Heart left ventricle (tissue), 16 donors: ENCODE measurements at regions of chr11 and their contacts with region 1.

Region 1: GRCh38 chr11:57456960-57457642 is 3.2 kb upstream of the RTN4RL2 start:
- DNase-seq: peak; percentile 87 to 95 (median 89)
- ATAC-seq: peak; percentile 57 to 89 (median 86)
- H3K4me3 ChIP-seq: peak overlapping the region in 2 of 12 donors; percentile 4 to 19
- H3K27ac ChIP-seq: no peak overlapping the region
- H3K4me1 ChIP-seq: peaks cover 3 to 43% (median 25%) of the 10 kb centered on the region in 12 donors
- H3K27me3 ChIP-seq: peaks cover 9 to 47% (median 32%) of the 10 kb centered on the region in 9 donors
- CTCF ChIP-seq: peak; percentile 98 to 100 (median 98)
- POLR2A ChIP-seq: no peak

Region 2: DNA sequence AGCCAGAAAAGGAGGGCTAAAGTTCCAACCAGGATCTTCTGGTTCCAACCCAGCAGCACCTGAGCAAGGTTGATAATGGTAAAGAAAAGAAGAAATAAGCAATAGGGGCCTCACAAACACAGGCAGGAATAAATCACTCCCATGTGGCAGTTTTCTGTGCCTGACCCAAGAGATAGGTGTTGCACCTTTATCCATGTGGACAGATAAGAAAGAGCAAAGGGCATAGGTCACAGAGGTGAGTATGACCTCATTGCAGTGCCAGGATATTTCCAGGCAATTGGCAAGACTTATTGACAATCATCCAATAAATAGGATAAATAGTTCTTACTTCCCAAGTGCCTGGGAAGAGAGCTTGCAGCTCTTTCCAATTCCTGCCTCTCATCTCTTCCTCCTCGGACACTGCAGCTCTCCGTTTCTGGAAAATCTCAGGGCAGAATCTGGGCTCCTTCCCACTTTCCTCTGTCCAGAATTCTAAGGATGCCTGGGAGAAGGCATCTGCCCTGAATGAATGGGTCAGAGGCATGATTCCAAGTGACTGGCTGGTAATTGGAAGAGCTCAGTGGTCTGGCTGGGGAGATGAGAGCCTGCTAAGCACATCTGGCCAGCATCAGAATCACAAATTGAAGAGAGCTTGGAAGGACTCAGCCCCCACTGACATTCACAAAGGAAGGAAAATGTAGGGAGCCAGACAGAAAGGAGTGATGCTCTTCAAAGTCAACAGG is 289.8 kb before region 1 on chr11:
- intact Hi-C with region 1: no loop called
- DNase-seq: no peak
- ATAC-seq: no peak
- H3K4me3 ChIP-seq: no peak overlapping the region
- H3K27ac ChIP-seq: no peak overlapping the region
- H3K4me1 ChIP-seq: peaks cover 0 to 4% (median 0%) of the 10 kb centered on the region in 12 donors
- H3K27me3 ChIP-seq: peaks cover 0 to 3% (median 0%) of the 10 kb centered on the region in 9 donors
- CTCF ChIP-seq: no peak
- POLR2A ChIP-seq: no peak

Region 3: DNA sequence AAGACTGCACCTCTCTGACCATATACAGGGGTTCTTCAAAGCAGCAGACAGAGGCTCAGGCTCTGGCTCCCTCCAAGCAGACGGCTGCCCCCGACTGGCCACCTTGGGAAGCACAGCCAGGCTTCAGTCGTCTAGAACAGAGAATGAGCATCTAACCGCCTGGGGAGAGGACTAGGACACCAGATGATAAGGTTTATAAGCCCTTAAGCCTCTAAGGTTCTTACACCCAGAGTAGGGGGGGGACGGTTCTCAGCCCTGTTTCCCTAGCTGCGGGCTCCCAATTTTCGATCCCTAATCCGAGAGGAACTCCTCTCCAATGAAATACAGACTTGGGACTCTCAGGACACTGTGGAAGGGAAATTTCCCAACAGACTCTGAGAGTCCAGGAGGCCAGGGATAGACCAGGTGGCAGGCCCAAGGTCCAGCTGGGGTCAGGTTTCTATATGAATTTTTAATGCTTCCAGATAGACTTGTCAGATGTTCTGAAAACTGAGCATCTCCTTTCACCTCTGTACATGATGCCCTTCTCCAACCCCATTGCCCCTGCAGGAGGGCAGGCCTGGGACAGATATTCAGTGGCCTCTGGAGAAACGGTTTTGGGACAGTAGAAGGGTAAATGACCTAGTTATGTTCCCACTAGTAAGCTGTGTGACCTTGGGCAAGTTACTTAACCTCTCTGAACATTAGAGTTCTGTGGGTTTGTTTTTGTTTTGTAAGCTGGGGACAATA is 23.5 kb after region 1 on chr11:
- intact Hi-C with region 1: loop called in 4 of 10 experiments (anchors 2 kb)
- DNase-seq: peak; percentile 58 to 81 (median 62)
- ATAC-seq: peak; percentile 17 to 54 (median 36)
- H3K4me3 ChIP-seq: no peak overlapping the region
- H3K27ac ChIP-seq: no peak overlapping the region
- H3K4me1 ChIP-seq: peaks cover 3 to 35% (median 22%) of the 10 kb centered on the region in 12 donors
- H3K27me3 ChIP-seq: peaks cover 0 to 36% (median 13%) of the 10 kb centered on the region in 9 donors
- CTCF ChIP-seq: peak; percentile 53 to 82 (median 68)
- POLR2A ChIP-seq: no peak

Region 4: GRCh38 chr11:57638005-57638781 is 181.1 kb after region 1 on chr11:
- intact Hi-C with region 1: loop called (anchors 2 to 10 kb)
- DNase-seq: peak; percentile 76 to 80 (median 79)
- ATAC-seq: peak; percentile 90 to 95 (median 92)
- H3K4me3 ChIP-seq: peak overlapping the region; percentile 40 to 97 (median 86)
- H3K27ac ChIP-seq: peak overlapping the region in 11 of 12 donors; percentile 17 to 87 (median 79)
- H3K4me1 ChIP-seq: peaks cover 0 to 33% (median 22%) of the 10 kb centered on the region in 12 donors
- H3K27me3 ChIP-seq: peaks cover 0 to 6% (median 0%) of the 10 kb centered on the region in 9 donors
- CTCF ChIP-seq: peak in 1 of 12 donors; percentile 3
- POLR2A ChIP-seq: peak in 1 of 2 donors; percentile 37

Region 5: GRCh38 chr11:57644748-57645688 is 187.9 kb after region 1 on chr11:
- intact Hi-C with region 1: loop called in 9 of 10 experiments (anchors 2 to 10 kb)
- DNase-seq: peak; percentile 74 to 83 (median 82)
- ATAC-seq: peak in 3 of 4 donors; percentile 74 to 80 (median 80)
- H3K4me3 ChIP-seq: peak overlapping the region in 3 of 12 donors; percentile 2 to 21 (median 19)
- H3K27ac ChIP-seq: peak overlapping the region in 10 of 12 donors; percentile 10 to 69 (median 56)
- H3K4me1 ChIP-seq: peaks cover 2 to 75% (median 46%) of the 10 kb centered on the region in 12 donors
- H3K27me3 ChIP-seq: peaks cover 4 to 43% (median 34%) of the 10 kb centered on the region in 9 donors
- CTCF ChIP-seq: peak; percentile 77 to 91 (median 86)
- POLR2A ChIP-seq: no peak

Region 6: DNA sequence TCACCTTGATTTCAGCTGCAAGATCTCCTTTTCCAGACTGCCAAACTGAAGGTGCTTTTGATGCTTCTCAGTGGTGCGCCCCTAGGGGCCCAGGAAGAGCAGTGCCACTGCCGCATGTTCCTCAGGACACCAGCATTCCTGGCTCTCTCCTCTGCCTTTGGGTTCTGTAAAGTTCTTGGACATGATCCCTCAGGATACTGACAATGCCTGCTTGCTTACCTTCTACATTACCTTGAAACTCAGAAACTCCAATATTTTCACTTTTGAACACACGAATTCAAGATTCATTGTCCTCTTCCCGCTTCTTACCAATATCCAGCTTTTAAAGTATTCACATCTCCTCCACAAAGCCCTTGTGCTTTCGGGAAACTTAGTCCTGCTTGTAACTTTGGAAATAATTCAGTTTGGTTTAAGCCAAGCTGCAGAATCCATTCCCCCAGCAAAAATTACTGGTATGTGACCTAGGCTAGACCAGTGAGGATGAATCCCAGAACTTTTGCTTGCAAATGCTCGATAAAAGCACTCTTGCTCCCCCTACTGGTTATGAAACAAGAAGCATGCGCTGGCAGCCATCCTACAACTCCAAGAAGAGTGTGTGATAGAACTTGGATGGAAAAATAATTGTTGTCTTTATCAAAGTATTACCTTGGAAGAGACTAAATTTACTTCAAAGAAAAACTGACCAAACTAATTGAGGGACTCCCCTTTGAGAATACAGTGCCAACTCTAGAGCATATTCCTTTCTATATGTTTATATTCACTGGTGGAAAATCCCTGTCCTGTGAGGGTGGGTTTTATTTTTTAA is 1067.3 kb after region 1 on chr11:
- intact Hi-C with region 1: loop called in 2 of 10 experiments (anchors 10 kb)
- DNase-seq: peak in 4 of 5 donors; percentile 34 to 51 (median 48)
- ATAC-seq: peak; percentile 51 to 87 (median 72)
- H3K4me3 ChIP-seq: peak overlapping the region in 4 of 12 donors; percentile 21 to 40 (median 22)
- H3K27ac ChIP-seq: peak overlapping the region in 1 of 12 donors; percentile 59
- H3K4me1 ChIP-seq: peaks cover 0 to 29% (median 4%) of the 10 kb centered on the region in 12 donors
- H3K27me3 ChIP-seq: no peaks in the 10 kb centered on the region
- CTCF ChIP-seq: peak; percentile 65 to 83 (median 73)
- POLR2A ChIP-seq: no peak